ENCODE measurements at regions of chr17 and their contacts with region 1.

Region 1: GRCh38 chr17:13931800-13932460 is 137.4 kb upstream of the COX10 start:
- DNase-seq: peak; percentile 44
- ATAC-seq: peak; percentile 92
- H3K4me3 Mint-ChIP-seq: peak overlapping the region; percentile 33
- H3K27ac Mint-ChIP-seq: peak overlapping the region; percentile 91
- H3K4me1 Mint-ChIP-seq: peaks cover 41% of the 10 kb centered on the region
- H3K27me3 Mint-ChIP-seq: no peaks in the 10 kb centered on the region
- CTCF ChIP-seq: no peak

Region 2: DNA sequence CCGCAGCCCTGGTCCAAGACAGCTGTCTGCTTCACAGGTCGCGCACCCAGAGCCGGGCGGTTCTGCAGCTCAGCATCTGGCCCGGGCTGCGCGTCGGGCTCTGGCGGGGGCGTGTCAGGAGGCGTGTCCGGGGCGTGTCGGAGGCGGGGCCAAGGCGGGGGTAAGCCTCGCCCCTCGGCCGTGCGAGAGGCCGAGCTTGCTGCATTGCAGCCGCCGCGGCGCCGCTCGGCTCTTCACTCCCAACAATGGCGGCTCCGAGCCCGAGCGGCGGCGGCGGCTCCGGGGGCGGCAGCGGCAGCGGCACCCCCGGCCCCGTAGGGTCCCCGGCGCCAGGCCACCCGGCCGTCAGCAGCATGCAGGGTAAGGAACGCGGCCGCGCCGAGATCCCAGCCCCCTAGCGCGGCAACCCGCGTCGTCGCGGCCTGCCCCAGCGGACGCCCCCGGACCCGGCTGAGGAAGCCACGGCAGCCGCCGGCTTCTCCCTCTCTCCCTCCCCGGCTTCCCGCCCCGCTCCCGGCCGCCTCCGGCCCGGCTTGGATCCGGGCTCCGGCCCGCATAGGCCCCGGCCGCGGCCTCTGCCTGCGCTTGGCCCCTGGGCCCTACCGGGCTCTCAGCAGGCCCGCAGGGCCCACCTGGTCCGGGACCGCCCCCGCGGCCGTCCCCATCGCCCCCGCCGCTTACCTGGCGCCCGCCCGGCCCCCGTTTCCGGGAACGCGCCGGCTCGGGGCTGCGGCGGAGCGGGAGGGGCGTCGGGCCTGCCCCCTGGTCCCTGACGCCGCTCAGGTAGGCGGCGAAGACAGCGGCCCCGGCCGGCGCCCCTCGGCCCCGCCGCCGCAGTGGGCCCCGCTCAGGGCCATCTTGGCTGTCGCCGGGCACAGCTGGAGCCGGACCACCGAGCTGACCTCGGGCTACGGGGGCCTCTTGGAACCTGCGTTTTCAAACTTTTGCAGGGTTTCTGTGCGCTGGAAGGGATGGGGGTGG is 1911.0 kb before region 1 on chr17 and contains the start of gene MAP2K4:
- CTCF ChIA-PET with region 1: no interaction called
- POLR2A ChIA-PET with region 1: interaction called, 10 read pairs
- intact Hi-C with region 1: no loop called
- DNase-seq: peak; percentile 100
- ATAC-seq: peak; percentile 97
- H3K4me3 Mint-ChIP-seq: peak within 1 kb of the TSS; percentile 79
- H3K27ac Mint-ChIP-seq: peak within 1 kb of the TSS; percentile 73
- H3K4me1 Mint-ChIP-seq: peaks cover 35% of the 10 kb centered on the region
- H3K27me3 Mint-ChIP-seq: peaks cover 2% of the 10 kb centered on the region
- CTCF ChIP-seq: no peak
- total RNA-seq, gene MAP2K4: 32.5 and 32.9 TPM in 2 replicates

Region 3: DNA sequence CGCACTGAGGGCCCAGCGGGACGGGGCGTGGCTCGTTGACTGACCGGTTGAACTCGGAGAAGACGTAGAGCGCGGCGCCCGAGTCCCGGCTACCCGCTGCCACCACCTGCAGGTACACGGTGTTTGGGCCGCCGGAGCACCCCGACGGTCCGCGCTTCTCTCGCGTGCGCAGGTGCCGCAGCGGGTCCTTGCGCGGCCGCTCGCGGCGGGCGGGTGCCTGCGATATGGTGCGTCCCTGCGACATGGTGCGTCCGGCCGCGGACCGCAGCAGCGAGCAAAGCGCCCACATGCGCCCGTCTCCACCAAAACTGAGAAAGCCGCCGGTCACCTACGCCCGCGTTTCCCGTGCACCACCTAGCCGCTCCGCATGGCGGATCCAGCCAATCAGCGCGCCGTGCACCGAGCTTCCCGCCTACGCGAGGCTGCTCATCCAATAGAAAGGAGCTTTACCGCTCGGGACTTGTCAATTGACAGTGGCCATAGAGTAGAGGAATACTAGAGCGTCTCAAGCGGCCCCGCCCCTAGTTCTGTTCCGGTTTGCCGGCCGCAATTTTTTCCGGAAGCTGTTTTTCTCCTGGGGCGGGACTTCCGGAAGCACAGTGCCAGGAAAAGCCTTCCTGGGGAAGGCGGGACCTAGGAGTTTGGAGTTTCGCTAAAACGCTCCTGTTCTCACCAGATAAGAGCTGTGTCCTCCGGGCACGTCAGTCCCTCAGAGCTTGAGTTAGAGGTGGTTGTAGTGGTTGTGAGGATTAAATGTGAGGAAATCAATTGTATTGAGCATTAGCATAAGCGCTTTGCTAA is 914.1 kb before region 1 on chr17 and contains the start of gene ELAC2:
- CTCF ChIA-PET with region 1: no interaction called
- POLR2A ChIA-PET with region 1: no interaction called
- intact Hi-C with region 1: loop called (anchors 10 kb)
- DNase-seq: peak; percentile 88
- ATAC-seq: peak; percentile 98
- H3K4me3 Mint-ChIP-seq: peak within 1 kb of the TSS; percentile 98
- H3K27ac Mint-ChIP-seq: peak within 1 kb of the TSS; percentile 96
- H3K4me1 Mint-ChIP-seq: peaks cover 17% of the 10 kb centered on the region
- H3K27me3 Mint-ChIP-seq: peaks cover 2% of the 10 kb centered on the region
- CTCF ChIP-seq: no peak
- total RNA-seq, gene ELAC2: 90.3 and 90.6 TPM in 2 replicates

Region 4: DNA sequence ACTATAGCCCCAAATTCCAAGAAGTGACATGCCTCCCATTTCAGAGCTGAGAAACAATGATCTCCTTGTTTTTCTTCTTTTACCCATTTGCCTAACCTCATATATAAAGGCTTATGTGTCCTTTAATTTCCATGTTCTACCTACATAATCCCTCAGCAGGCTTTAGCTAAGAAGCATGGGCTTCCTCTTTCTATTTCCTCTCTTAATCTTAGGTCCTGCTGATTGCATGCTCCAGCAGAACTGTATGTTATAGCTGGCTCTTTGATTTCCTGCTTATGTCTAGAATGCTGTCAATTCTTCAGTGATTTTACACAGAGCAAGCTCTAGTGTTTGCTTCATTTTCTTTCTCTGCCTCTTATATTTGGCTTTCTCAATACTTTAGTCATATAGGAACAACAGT is 14.3 kb before region 1 on chr17:
- CTCF ChIA-PET with region 1: no interaction called
- POLR2A ChIA-PET with region 1: interaction called, 11 read pairs
- intact Hi-C with region 1: loop called (anchors 1 kb)
- DNase-seq: no peak
- ATAC-seq: peak; percentile 77
- H3K4me3 Mint-ChIP-seq: peak overlapping the region; percentile 48
- H3K27ac Mint-ChIP-seq: peak overlapping the region; percentile 77
- H3K4me1 Mint-ChIP-seq: peaks cover 72% of the 10 kb centered on the region
- H3K27me3 Mint-ChIP-seq: no peaks in the 10 kb centered on the region
- CTCF ChIP-seq: no peak

Region 5: GRCh38 chr17:14069251-14070021 is 137.5 kb after region 1 on chr17 and contains the start of gene COX10:
- CTCF ChIA-PET with region 1: no interaction called
- POLR2A ChIA-PET with region 1: no interaction called
- intact Hi-C with region 1: loop called (anchors 1 kb)
- DNase-seq: peak; percentile 87
- ATAC-seq: peak; percentile 98
- H3K4me3 Mint-ChIP-seq: peak within 1 kb of the TSS; percentile 97
- H3K27ac Mint-ChIP-seq: peak within 1 kb of the TSS; percentile 90
- H3K4me1 Mint-ChIP-seq: peaks cover 33% of the 10 kb centered on the region
- H3K27me3 Mint-ChIP-seq: no peaks in the 10 kb centered on the region
- CTCF ChIP-seq: no peak
- total RNA-seq, gene COX10: 19.4 and 20.8 TPM in 2 replicates

Region 6: GRCh38 chr17:14091367-14091766 is 159.4 kb after region 1 on chr17:
- CTCF ChIA-PET with region 1: no interaction called
- POLR2A ChIA-PET with region 1: no interaction called
- intact Hi-C with region 1: no loop called
- DNase-seq: no peak
- ATAC-seq: no peak
- H3K4me3 Mint-ChIP-seq: no peak overlapping the region
- H3K27ac Mint-ChIP-seq: no peak overlapping the region
- H3K4me1 Mint-ChIP-seq: no peaks in the 10 kb centered on the region
- H3K27me3 Mint-ChIP-seq: no peaks in the 10 kb centered on the region
- CTCF ChIP-seq: no peak

Region 7: GRCh38 chr17:14351493-14351892 is 419.6 kb after region 1 on chr17:
- CTCF ChIA-PET with region 1: no interaction called
- POLR2A ChIA-PET with region 1: no interaction called
- intact Hi-C with region 1: loop called (anchors 2 kb)
- DNase-seq: no peak
- ATAC-seq: peak; percentile 97
- H3K4me3 Mint-ChIP-seq: peak overlapping the region; percentile 32
- H3K27ac Mint-ChIP-seq: peak overlapping the region; percentile 63
- H3K4me1 Mint-ChIP-seq: peaks cover 41% of the 10 kb centered on the region
- H3K27me3 Mint-ChIP-seq: peaks cover 21% of the 10 kb centered on the region
- CTCF ChIP-seq: no peak

Region 8: GRCh38 chr17:14427900-14428647 is 496.1 kb after region 1 on chr17:
- CTCF ChIA-PET with region 1: no interaction called
- POLR2A ChIA-PET with region 1: interaction called, 4 read pairs
- intact Hi-C with region 1: loop called (anchors 1 kb)
- DNase-seq: peak; percentile 37
- ATAC-seq: peak; percentile 86
- H3K4me3 Mint-ChIP-seq: peak overlapping the region; percentile 75
- H3K27ac Mint-ChIP-seq: peak overlapping the region; percentile 87
- H3K4me1 Mint-ChIP-seq: peaks cover 50% of the 10 kb centered on the region
- H3K27me3 Mint-ChIP-seq: no peaks in the 10 kb centered on the region
- CTCF ChIP-seq: no peak